Activated CD4-positive, alpha-beta memory T cell treated with anti-CD3 and anti-CD28 coated beads for 36 hours (primary cell): ENCODE measurements at regions of chr7 and their contacts with region 1.

Region 1: GRCh38 chr7:101507791-101508252 is 121.3 kb downstream of the MYL10 start:
- DNase-seq: peak; percentile 55
- H3K4me3 Mint-ChIP-seq: peak overlapping the region; percentile 25
- H3K27ac Mint-ChIP-seq: no peak overlapping the region
- H3K4me1 Mint-ChIP-seq: peaks cover 3% of the 10 kb centered on the region
- H3K27me3 Mint-ChIP-seq: peaks cover 20% of the 10 kb centered on the region

Region 2: DNA sequence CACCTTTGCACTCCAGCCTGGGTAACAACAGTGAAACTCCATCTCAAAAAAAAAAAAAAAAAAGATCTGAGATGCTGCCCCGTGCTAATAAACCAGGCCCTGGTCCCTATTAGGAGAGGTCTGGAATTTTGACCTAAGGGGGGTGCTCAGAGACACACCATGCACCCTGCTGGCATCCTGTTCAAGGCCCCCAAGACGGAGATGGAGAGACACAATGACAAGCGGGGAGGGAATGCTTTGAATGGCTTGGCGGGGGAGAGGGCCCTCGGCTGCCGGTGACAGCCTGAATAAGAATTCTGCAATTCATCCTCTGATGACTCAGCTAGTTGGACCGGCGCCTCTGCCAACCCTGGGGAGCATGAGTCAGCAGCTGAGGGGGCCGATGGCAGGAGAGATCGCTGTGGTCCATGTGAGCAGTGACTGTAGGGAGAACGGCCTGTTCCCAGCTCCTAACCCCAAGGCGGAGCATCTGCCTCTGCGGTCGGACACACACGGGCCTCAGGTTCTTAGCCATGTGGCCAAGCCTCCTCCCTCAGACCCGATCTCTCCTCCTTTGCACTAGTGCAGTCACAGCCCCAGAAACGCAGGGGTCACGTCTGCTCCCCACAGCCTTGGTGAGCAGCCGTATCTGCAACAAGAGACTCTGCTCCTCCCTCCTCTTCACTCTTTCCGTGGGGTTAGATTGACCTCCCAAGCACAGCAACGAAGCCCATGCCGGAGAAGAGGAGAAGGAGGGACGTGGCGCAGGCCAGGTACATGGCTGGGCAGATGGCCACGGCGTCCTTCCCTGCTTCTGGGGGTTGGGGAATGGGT is 407.6 kb before region 1 on chr7:
- CTCF ChIA-PET with region 1: no interaction called
- POLR2A ChIA-PET with region 1: no interaction called
- intact Hi-C with region 1: no loop called
- DNase-seq: peak; percentile 85
- H3K4me3 Mint-ChIP-seq: no peak overlapping the region
- H3K27ac Mint-ChIP-seq: no peak overlapping the region
- H3K4me1 Mint-ChIP-seq: peaks cover 11% of the 10 kb centered on the region
- H3K27me3 Mint-ChIP-seq: peaks cover 19% of the 10 kb centered on the region

Region 3: DNA sequence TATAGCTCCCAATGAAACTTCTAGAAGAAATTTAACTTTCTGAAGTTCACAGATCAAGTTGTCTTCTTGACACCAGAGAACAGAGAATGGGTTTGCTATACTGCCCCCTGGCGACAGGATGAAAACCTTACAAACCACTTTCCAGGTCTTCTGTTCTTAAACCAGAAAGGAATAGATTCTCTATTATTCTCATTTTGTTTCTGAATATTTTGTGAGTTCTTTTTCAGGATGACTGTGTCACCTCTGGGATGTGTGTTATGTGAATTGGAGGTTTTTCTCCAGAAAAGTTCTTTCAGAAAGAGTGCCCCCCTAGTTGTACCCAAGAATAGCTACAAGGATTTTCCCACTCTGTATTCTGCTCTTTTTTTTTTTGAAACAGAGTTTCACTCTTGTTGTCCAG is 192.5 kb before region 1 on chr7:
- CTCF ChIA-PET with region 1: no interaction called
- POLR2A ChIA-PET with region 1: no interaction called
- intact Hi-C with region 1: loop called (anchors 5 kb)
- DNase-seq: peak; percentile 64
- H3K4me3 Mint-ChIP-seq: no peak overlapping the region
- H3K27ac Mint-ChIP-seq: no peak overlapping the region
- H3K4me1 Mint-ChIP-seq: no peaks in the 10 kb centered on the region
- H3K27me3 Mint-ChIP-seq: no peaks in the 10 kb centered on the region

Region 4: GRCh38 chr7:101363734-101364374 is 144.0 kb before region 1 on chr7:
- CTCF ChIA-PET with region 1: interaction called, 7 read pairs
- POLR2A ChIA-PET with region 1: interaction called, 3 read pairs
- intact Hi-C with region 1: loop called (anchors 1 kb)
- DNase-seq: peak; percentile 82
- H3K4me3 Mint-ChIP-seq: no peak overlapping the region
- H3K27ac Mint-ChIP-seq: no peak overlapping the region
- H3K4me1 Mint-ChIP-seq: peaks cover 8% of the 10 kb centered on the region
- H3K27me3 Mint-ChIP-seq: peaks cover 25% of the 10 kb centered on the region

Region 5: DNA sequence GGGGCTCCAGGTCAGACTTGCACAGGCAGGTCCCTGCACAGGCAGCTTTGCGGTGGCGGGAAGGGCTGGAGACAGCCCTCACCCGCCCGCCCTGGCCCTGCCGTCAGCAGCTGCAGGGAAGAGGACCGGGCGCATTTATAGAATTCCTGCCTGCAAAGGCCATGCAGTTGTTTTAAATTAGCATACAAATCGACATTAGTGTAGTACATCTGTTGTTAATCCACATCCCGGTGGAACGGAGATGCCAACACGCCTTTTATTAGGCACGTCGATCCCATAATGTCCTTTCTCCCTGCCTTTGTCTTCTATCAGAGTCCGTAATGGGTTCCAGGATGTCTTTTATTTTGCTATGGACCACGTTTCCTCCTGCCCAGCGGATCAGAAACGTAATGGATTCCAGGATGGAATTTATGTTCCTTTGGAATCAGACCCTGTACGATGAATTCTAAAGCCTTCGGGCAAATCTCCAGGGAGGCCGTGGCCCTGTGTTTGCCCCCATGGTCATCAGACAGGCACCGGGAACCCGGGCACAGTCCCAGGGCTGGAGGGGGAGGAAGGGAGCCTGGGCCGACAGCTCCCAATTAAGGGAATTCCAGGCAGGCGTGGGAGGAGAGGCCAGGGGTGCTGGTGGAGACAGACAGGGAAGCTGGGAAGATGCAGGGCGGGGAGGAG is 21.3 kb before region 1 on chr7:
- CTCF ChIA-PET with region 1: no interaction called
- POLR2A ChIA-PET with region 1: no interaction called
- intact Hi-C with region 1: no loop called
- DNase-seq: no peak
- H3K4me3 Mint-ChIP-seq: no peak overlapping the region
- H3K27ac Mint-ChIP-seq: no peak overlapping the region
- H3K4me1 Mint-ChIP-seq: no peaks in the 10 kb centered on the region
- H3K27me3 Mint-ChIP-seq: peaks cover 1% of the 10 kb centered on the region

Region 6: DNA sequence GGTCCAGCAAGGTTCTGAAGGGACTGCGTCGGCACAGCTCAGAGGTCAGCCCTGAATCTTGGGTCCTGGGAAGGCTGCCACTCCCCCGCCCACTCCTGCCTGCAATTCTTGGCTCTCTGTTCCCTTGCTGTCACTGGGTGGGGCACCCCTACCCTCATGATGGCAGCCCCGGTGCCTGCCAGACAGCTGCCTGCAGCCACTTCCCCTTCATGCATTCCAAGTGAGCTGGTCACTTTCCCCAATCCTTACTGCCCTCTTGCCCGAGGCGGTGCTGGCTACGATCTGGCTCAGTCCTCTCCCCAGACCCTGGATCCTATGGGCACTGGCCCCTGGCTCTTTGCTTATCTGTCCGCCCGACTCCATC is 107.1 kb after region 1 on chr7:
- CTCF ChIA-PET with region 1: no interaction called
- POLR2A ChIA-PET with region 1: no interaction called
- intact Hi-C with region 1: no loop called
- DNase-seq: no peak
- H3K4me3 Mint-ChIP-seq: no peak overlapping the region
- H3K27ac Mint-ChIP-seq: no peak overlapping the region
- H3K4me1 Mint-ChIP-seq: no peaks in the 10 kb centered on the region
- H3K27me3 Mint-ChIP-seq: peaks cover 6% of the 10 kb centered on the region